ENCODE measurements at regions of chr1 and their contacts with region 1.

Region 1: DNA sequence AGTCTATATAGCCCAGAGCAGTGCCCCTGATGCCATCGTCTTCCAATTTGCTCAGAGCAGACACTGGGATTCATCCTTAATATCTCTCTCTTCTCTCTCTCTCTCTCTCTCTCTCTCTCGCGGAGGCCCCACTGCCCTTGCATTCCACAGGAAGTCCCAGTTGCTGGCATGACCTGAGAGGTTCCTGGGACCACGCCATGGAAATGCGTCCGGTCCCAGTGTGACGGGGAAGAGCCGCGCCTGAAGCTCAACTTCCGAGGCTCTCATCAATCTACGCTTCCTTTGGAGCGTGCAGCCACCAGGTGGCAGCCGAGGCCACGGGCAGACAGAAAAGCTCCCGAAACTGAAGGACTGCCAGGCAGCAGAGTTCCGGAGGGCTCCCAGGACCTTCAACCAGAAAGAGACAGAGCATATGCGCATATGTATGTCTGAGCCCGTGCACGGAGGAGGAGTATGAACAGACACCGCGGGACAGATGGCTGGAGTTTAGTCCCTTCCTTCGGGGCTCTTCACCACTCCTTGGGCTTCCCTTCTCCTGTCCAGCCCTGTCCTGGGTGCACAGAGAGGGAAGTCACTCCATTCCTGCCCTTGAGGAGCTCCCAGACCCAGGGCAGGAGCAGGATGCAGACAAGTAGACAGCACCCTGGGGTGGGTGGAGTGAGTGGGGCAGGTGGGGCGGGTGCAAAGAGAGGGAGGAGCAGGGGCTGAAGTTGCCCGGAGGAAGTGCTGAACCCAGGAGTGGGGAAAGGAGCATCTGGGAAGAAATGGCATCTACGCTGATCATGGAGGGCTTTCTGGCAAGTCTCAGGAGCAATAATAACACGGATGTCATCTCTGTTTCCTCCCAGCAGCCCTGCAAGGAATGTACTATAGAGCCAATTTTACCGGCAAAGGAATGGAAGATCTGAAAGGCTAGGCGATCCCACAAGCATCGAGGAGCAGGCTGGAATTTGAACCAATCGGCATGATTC is 10.5 kb downstream of the PDZK1IP1 start:
- DNase-seq: peak; percentile 90
- H3K4me3 Mint-ChIP-seq: peak overlapping the region; percentile 79
- H3K27ac Mint-ChIP-seq: no peak overlapping the region
- H3K4me1 Mint-ChIP-seq: peaks cover 10% of the 10 kb centered on the region
- H3K27me3 Mint-ChIP-seq: peaks cover 34% of the 10 kb centered on the region

Region 2: GRCh38 chr1:47262787-47263413 is 83.6 kb after region 1 on chr1:
- CTCF ChIA-PET with region 1: interaction called, 15 read pairs
- intact Hi-C with region 1: no loop called
- DNase-seq: peak; percentile 48
- H3K4me3 Mint-ChIP-seq: no peak overlapping the region
- H3K27ac Mint-ChIP-seq: no peak overlapping the region
- H3K4me1 Mint-ChIP-seq: no peaks in the 10 kb centered on the region
- H3K27me3 Mint-ChIP-seq: no peaks in the 10 kb centered on the region

Region 3: GRCh38 chr1:47333922-47334764 is 154.8 kb after region 1 on chr1:
- CTCF ChIA-PET with region 1: interaction called, 5 read pairs
- intact Hi-C with region 1: loop called (anchors 2 kb)
- DNase-seq: peak; percentile 75
- H3K4me3 Mint-ChIP-seq: peak overlapping the region; percentile 88
- H3K27ac Mint-ChIP-seq: peak overlapping the region; percentile 93
- H3K4me1 Mint-ChIP-seq: peaks cover 20% of the 10 kb centered on the region
- H3K27me3 Mint-ChIP-seq: no peaks in the 10 kb centered on the region

Region 4: GRCh38 chr1:47424336-47424982 is 245.2 kb after region 1 on chr1:
- CTCF ChIA-PET with region 1: interaction called, 5 read pairs
- intact Hi-C with region 1: loop called (anchors 1 kb)
- DNase-seq: peak; percentile 34
- H3K4me3 Mint-ChIP-seq: no peak overlapping the region
- H3K27ac Mint-ChIP-seq: no peak overlapping the region
- H3K4me1 Mint-ChIP-seq: peaks cover 2% of the 10 kb centered on the region
- H3K27me3 Mint-ChIP-seq: peaks cover 42% of the 10 kb centered on the region

Region 5: DNA sequence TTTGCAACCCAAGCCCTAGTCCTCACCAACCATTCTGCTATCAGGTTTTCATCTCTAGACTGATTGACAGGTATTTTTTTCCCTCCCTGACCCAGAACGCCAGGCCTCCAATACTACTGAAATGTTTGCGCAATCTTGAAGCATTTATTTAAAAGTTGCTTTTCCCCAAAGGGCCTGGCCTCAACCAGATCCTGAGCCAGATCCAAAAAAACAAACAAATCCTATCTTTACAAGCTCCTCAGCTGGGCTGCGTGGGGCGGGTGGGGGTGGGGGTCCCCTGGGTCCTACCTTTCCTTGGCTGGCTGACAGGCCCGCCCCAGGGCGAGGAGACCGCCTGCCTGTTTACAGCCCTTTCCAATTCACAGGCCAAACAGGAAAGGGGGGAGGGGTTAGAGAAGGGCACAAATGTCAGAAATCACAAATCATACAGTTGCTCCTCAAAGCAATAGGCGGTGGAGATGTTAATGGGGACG is 357.4 kb after region 1 on chr1:
- CTCF ChIA-PET with region 1: no interaction called
- intact Hi-C with region 1: no loop called
- DNase-seq: no peak
- H3K4me3 Mint-ChIP-seq: no peak overlapping the region
- H3K27ac Mint-ChIP-seq: no peak overlapping the region
- H3K4me1 Mint-ChIP-seq: peaks cover 8% of the 10 kb centered on the region
- H3K27me3 Mint-ChIP-seq: peaks cover 52% of the 10 kb centered on the region

Region 6: DNA sequence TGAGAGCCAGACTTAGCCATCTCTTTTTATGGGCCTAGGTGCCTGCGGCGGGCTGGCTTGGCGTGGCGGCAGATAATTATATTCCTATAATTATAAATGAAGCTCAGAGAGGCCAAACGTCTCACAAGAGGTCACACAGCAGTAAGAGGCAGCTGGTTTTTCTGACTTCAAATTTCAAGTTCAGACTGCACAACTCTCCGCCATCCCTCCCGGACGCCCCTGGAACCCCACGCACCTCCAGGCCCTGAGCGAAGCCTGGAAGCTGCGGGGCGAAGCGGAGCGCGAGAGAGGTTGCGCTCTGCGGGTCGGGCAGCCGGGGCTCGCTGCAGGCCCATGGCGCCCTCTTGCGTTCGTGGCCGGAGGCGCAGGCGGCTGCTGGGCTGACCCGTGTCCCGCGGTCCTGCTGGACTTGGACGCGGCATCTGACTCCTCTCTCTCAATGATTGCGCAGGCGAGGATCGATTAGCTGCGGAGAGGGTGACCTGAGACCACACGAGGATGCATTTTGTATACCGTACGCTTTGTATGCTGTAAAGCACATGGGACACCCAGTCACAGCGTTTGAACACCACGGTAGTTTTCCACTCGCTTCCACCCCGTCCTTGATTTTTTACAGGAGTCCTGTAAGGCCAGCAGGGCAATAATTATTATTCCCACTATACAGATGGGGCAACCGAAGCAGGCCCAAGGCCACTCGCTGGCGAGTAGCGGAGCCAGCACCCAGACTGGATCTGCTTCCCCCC is 531.2 kb after region 1 on chr1:
- CTCF ChIA-PET with region 1: interaction called, 4 read pairs
- intact Hi-C with region 1: loop called (anchors 1 kb)
- DNase-seq: peak; percentile 68
- H3K4me3 Mint-ChIP-seq: no peak overlapping the region
- H3K27ac Mint-ChIP-seq: no peak overlapping the region
- H3K4me1 Mint-ChIP-seq: peaks cover 3% of the 10 kb centered on the region
- H3K27me3 Mint-ChIP-seq: peaks cover 71% of the 10 kb centered on the region

Measured in activated naive CD4-positive, alpha-beta T cell treated with anti-CD3 and anti-CD28 coated beads for 36 hours (primary cell).